ENCODE measurements at regions of chr7 and their contacts with region 1.

Region 1: GRCh38 chr7:55534175-55534915 is 38.0 kb downstream of the VOPP1 start:
- DNase-seq: peak in 6 of 9 experiments; percentile 21 to 74 (median 56)
- ATAC-seq: peak; percentile 43
- H3K4me3 ChIP-seq: peak overlapping the region in 1 of 2 experiments; percentile 21
- H3K4me3 Mint-ChIP-seq: peak overlapping the region; percentile 74
- H3K27ac ChIP-seq: peak overlapping the region in 1 of 2 experiments; percentile 38
- H3K27ac Mint-ChIP-seq: peak overlapping the region; percentile 97
- H3K4me1 ChIP-seq: peaks cover 70% of the 10 kb centered on the region
- H3K4me1 Mint-ChIP-seq: peaks cover 94% of the 10 kb centered on the region
- H3K27me3 ChIP-seq: no peaks in the 10 kb centered on the region
- H3K27me3 Mint-ChIP-seq: no peaks in the 10 kb centered on the region
- CTCF ChIP-seq: no peak

Region 2: GRCh38 chr7:55469271-55469681 is 65.1 kb before region 1 on chr7:
- CTCF ChIA-PET with region 1: interaction called, 3 read pairs
- POLR2A ChIA-PET with region 1: interaction called, 12 read pairs
- intact Hi-C with region 1: no loop called
- DNase-seq: peak in 8 of 9 experiments; percentile 19 to 74 (median 54)
- ATAC-seq: peak; percentile 72
- H3K4me3 ChIP-seq: peak overlapping the region in 1 of 2 experiments; percentile 4
- H3K4me3 Mint-ChIP-seq: peak overlapping the region; percentile 54
- H3K27ac ChIP-seq: peak overlapping the region; percentile 31 to 62
- H3K27ac Mint-ChIP-seq: peak overlapping the region; percentile 96
- H3K4me1 ChIP-seq: peaks cover 63% of the 10 kb centered on the region
- H3K4me1 Mint-ChIP-seq: peaks cover 67% of the 10 kb centered on the region
- H3K27me3 ChIP-seq: no peaks in the 10 kb centered on the region
- H3K27me3 Mint-ChIP-seq: no peaks in the 10 kb centered on the region
- CTCF ChIP-seq: no peak

Region 3: GRCh38 chr7:55477781-55478374 is 56.5 kb before region 1 on chr7:
- CTCF ChIA-PET with region 1: no interaction called
- POLR2A ChIA-PET with region 1: no interaction called
- intact Hi-C with region 1: loop called in 1 of 2 experiments (anchors 5 kb)
- DNase-seq: peak in 1 of 9 experiments; percentile 45
- ATAC-seq: no peak
- H3K4me3 ChIP-seq: no peak overlapping the region
- H3K4me3 Mint-ChIP-seq: no peak overlapping the region
- H3K27ac ChIP-seq: no peak overlapping the region
- H3K27ac Mint-ChIP-seq: peak overlapping the region; percentile 49
- H3K4me1 ChIP-seq: peaks cover 62% of the 10 kb centered on the region
- H3K4me1 Mint-ChIP-seq: peaks cover 83% of the 10 kb centered on the region
- H3K27me3 ChIP-seq: no peaks in the 10 kb centered on the region
- H3K27me3 Mint-ChIP-seq: no peaks in the 10 kb centered on the region
- CTCF ChIP-seq: no peak

Region 4: DNA sequence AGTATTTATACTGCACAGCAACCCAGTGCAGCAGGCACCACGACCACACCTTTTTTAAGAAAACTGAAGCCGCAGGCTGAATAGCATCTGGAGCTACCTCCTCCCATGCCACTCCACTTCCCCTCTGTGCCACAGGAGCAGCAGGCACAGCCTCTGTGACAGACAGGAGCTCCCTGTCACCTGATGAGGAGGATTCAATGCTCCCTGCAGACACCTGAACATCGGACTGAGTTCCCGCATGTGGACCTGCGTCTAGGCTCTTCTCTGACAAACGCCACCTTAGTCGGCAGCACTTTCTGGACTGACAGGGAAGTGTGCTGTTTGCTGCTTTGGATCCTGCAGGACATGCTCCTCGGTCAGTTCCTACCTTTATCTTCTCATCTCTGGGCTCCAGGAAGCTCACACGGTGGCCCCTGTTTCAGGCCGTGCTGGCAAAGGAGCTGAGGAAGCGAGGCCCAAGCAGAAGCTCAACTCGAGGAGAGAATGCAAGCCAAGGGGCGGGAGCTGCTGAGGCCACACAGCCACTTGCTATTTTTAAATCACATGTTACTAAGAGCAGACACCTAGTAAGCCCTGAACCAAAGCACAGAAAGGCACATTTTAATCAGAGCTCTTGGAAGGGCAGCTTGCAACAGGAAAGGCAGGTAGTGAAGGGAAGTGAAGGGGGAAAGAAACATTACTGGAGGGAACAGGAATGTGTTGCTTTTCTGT is 18.6 kb before region 1 on chr7:
- CTCF ChIA-PET with region 1: interaction called, 3 read pairs
- POLR2A ChIA-PET with region 1: no interaction called
- intact Hi-C with region 1: loop called in 1 of 2 experiments (anchors 2 kb)
- DNase-seq: peak in 1 of 9 experiments; percentile 24
- ATAC-seq: no peak
- H3K4me3 ChIP-seq: no peak overlapping the region
- H3K4me3 Mint-ChIP-seq: no peak overlapping the region
- H3K27ac ChIP-seq: no peak overlapping the region
- H3K27ac Mint-ChIP-seq: peak overlapping the region; percentile 75
- H3K4me1 ChIP-seq: no peaks in the 10 kb centered on the region
- H3K4me1 Mint-ChIP-seq: peaks cover 53% of the 10 kb centered on the region
- H3K27me3 ChIP-seq: no peaks in the 10 kb centered on the region
- H3K27me3 Mint-ChIP-seq: no peaks in the 10 kb centered on the region
- CTCF ChIP-seq: no peak

Measured in CD8-positive, alpha-beta T cell (primary cell).